Activated B cell treated with CpG ODN at 0.5 μM for 24 hours (primary cell): ENCODE measurements at regions of chr16 and their contacts with region 1.

Region 1: DNA sequence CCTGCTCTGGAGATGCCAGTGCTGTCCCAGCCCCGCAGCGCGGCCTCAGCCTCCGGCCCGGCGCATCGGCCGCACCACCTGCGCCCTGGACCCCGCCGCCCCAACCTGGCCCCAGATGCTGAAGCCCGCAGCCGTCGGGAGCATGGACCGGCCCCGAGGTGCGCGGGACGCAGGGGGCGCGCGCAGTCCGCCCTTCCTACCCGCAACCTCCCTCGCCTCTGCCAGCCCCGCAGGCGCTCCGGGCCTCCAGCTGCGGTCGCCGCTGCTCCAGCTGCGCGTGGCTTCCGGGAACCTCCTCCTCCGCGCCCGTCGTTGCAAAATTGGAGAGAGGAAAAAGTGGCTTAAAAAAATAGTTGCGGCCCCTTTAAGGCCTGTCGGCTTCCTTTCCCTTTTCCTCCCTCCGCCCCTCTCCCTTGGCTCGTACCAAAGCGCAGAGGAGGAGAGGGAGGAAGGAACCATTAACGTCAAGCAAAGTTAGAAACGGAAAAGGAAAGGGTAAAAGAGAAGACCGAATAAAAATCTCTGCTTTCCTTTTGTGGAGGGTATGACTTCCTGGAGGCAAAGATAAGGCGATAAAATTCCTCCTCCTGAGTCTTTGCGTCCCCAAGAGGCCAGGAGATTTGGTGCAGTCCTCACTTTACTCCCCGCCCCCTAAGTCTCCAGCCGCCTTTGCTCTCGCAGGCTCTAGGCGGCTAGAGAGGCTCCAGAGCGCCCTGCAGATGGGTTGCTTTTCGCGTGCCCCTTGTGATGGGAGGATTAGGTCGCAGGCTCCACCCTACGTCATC is at the start of gene CDIPT:
- DNase-seq: peak; percentile 79
- ATAC-seq: peak; percentile 98
- H3K4me3 Mint-ChIP-seq: peak within 1 kb of the TSS; percentile 94
- H3K27ac Mint-ChIP-seq: peak within 1 kb of the TSS; percentile 100
- H3K4me1 Mint-ChIP-seq: peaks cover 24% of the 10 kb centered on the region
- H3K27me3 Mint-ChIP-seq: peaks cover 6% of the 10 kb centered on the region
- CTCF ChIP-seq: no peak
- total RNA-seq, gene CDIPT: 28.7 and 29.8 TPM in 2 replicates

Region 2: DNA sequence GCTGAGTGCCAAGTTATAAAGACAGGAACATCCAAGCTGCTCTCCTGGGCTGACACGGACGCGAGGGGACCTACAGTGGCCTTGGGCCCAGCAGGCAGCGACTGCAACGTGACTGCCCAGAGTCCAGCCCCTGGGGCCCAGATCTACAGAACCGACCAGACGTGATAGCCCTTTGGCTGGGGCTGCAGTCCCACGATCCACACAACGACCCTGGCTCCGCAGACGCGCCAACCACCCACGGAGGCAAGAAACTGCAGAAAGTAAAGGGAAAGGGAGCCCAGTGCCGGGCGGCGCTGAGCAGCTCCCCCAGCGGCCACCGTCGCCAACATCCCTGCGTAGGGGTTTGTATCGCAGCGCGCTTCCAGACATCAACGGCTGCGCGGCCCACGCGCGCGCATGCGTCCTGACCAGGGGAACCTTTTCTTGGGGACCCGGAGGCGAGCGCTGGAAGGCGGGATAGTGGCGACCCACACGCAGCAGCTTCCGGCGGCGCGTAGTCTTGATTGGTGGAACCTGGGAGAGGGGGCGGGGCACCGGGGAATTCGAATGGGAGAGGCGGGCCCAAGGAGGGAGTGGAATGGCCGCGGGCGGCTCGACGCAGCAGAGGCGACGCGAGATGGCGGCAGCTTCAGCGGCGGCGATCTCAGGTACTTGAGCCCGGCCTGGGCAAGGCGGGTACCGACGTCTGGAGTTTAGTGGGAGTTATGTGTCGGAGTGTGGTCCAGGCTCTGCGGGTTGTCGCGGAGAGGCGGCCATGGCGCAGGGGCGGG is 72.7 kb before region 1 on chr16 and contains the start of gene KIF22:
- CTCF ChIA-PET with region 1: no interaction called
- POLR2A ChIA-PET with region 1: interaction called, 6 read pairs
- intact Hi-C with region 1: loop called (anchors 1 kb)
- DNase-seq: peak; percentile 99
- ATAC-seq: peak; percentile 97
- H3K4me3 Mint-ChIP-seq: peak within 1 kb of the TSS; percentile 98
- H3K27ac Mint-ChIP-seq: peak within 1 kb of the TSS; percentile 93
- H3K4me1 Mint-ChIP-seq: peaks cover 34% of the 10 kb centered on the region
- H3K27me3 Mint-ChIP-seq: no peaks in the 10 kb centered on the region
- CTCF ChIP-seq: no peak
- total RNA-seq, gene KIF22: 33.1 and 40.1 TPM in 2 replicates

Region 3: GRCh38 chr16:29842732-29843346 is 20.2 kb before region 1 on chr16:
- CTCF ChIA-PET with region 1: no interaction called
- POLR2A ChIA-PET with region 1: no interaction called
- intact Hi-C with region 1: no loop called
- DNase-seq: no peak
- ATAC-seq: no peak
- H3K4me3 Mint-ChIP-seq: no peak overlapping the region
- H3K27ac Mint-ChIP-seq: no peak overlapping the region
- H3K4me1 Mint-ChIP-seq: no peaks in the 10 kb centered on the region
- H3K27me3 Mint-ChIP-seq: no peaks in the 10 kb centered on the region
- CTCF ChIP-seq: no peak

Region 4: DNA sequence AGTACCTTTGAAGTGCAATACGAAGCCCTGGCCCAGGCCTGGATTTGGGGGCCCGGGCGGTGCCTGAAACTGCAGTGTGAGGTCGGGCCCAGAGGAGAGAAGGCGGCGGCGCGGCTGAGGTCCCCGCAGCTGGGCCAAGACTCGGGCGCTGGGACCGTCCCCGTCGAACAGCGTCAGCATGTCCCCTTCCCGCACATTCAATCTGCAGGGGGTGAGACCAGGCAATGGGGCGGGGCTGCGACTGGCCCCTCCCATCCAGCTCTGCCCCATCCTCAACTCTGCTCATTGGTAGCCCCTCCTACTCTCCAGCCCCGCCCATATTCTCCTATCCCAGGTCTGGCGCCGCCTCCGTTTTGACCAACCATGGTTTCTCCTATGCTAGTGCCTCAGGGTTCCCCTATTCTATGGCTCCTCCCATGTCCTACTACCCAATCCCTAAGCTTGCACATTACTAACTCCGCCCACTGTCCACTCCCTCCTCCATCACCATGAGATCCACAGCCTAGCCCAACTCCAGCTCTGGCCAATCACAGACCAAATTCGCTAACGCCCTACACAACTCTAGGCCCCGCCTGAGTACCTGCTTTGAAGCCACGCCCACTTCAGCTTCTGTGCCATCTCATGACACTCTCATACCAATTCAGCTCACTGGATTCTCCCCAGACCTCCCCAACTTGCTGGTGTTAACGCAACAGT is 14.3 kb after region 1 on chr16:
- CTCF ChIA-PET with region 1: no interaction called
- POLR2A ChIA-PET with region 1: no interaction called
- intact Hi-C with region 1: loop called (anchors 2 kb)
- DNase-seq: peak; percentile 23
- ATAC-seq: peak; percentile 79
- H3K4me3 Mint-ChIP-seq: peak overlapping the region; percentile 56
- H3K27ac Mint-ChIP-seq: no peak overlapping the region
- H3K4me1 Mint-ChIP-seq: peaks cover 17% of the 10 kb centered on the region
- H3K27me3 Mint-ChIP-seq: peaks cover 30% of the 10 kb centered on the region
- CTCF ChIP-seq: no peak

Region 5: GRCh38 chr16:29915590-29916247 is 52.6 kb after region 1 on chr16:
- CTCF ChIA-PET with region 1: no interaction called
- POLR2A ChIA-PET with region 1: interaction called, 10 read pairs
- intact Hi-C with region 1: no loop called
- DNase-seq: no peak
- ATAC-seq: no peak
- H3K4me3 Mint-ChIP-seq: no peak overlapping the region
- H3K27ac Mint-ChIP-seq: no peak overlapping the region
- H3K4me1 Mint-ChIP-seq: peaks cover 3% of the 10 kb centered on the region
- H3K27me3 Mint-ChIP-seq: no peaks in the 10 kb centered on the region
- CTCF ChIP-seq: no peak

Region 6: DNA sequence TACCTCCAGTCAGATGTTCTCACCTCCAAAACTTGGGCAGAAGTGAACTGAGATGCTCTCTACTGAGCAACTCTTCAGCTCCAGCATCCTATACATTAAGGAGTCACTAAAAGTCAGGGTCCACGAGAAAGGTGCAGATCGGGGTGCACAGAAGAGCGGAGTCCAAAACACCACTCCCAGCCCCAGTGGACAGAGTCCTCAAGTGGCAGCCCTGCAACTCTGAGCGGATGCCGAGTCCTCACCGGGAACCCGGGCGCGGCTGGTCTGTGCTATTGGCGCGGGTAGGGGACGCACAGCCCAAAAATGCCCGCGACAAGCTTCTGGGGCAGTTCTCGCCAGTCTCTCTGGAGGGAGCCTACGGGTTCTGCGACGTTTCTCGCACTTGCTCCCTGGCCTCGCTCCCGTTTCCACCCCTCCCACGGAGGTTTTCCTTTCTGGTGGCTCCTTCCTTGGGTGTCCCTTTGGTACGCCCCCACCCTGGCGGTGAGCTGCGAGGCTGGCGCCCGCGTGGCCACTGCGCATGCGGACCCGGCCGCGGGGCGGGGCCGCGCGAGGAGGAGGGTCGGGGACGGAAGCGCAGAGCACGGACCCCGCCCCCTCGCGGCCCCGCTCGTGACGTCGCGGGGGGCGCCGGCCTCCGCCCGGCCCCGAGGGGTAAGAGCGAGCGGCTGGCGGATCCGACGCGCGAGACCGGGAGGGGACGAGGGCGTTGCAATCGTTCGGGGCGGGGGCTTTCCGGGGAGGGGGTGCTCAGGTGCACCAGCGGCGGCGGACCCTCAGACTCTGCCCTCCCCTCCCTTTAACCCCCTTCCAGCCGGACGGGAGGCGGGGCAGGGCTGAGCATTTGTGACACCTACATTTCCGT is 98.6 kb after region 1 on chr16 and contains the start of gene TMEM219:
- CTCF ChIA-PET with region 1: no interaction called
- POLR2A ChIA-PET with region 1: no interaction called
- intact Hi-C with region 1: loop called (anchors 1 kb)
- DNase-seq: peak; percentile 98
- ATAC-seq: peak; percentile 90
- H3K4me3 Mint-ChIP-seq: peak within 1 kb of the TSS; percentile 88
- H3K27ac Mint-ChIP-seq: peak within 1 kb of the TSS; percentile 90
- H3K4me1 Mint-ChIP-seq: peaks cover 17% of the 10 kb centered on the region
- H3K27me3 Mint-ChIP-seq: no peaks in the 10 kb centered on the region
- CTCF ChIP-seq: no peak
- total RNA-seq, gene TMEM219: 50.3 and 50.8 TPM in 2 replicates

Region 7: GRCh38 chr16:29995911-29996772 is 133.1 kb after region 1 on chr16 and contains the start of gene INO80E:
- CTCF ChIA-PET with region 1: interaction called, 4 read pairs
- POLR2A ChIA-PET with region 1: interaction called, 5 read pairs
- intact Hi-C with region 1: loop called (anchors 1 kb)
- DNase-seq: peak; percentile 100
- ATAC-seq: peak; percentile 96
- H3K4me3 Mint-ChIP-seq: peak within 1 kb of the TSS; percentile 98
- H3K27ac Mint-ChIP-seq: peak within 1 kb of the TSS; percentile 97
- H3K4me1 Mint-ChIP-seq: peaks cover 29% of the 10 kb centered on the region
- H3K27me3 Mint-ChIP-seq: no peaks in the 10 kb centered on the region
- CTCF ChIP-seq: no peak
- total RNA-seq, gene INO80E: 83.5 and 93.6 TPM in 2 replicates

Region 8: GRCh38 chr16:30052671-30053372 is 189.7 kb after region 1 on chr16:
- CTCF ChIA-PET with region 1: no interaction called
- POLR2A ChIA-PET with region 1: no interaction called
- intact Hi-C with region 1: loop called (anchors 1 kb)
- DNase-seq: peak; percentile 86
- ATAC-seq: peak; percentile 87
- H3K4me3 Mint-ChIP-seq: peak overlapping the region; percentile 84
- H3K27ac Mint-ChIP-seq: peak overlapping the region; percentile 46
- H3K4me1 Mint-ChIP-seq: peaks cover 9% of the 10 kb centered on the region
- H3K27me3 Mint-ChIP-seq: no peaks in the 10 kb centered on the region
- CTCF ChIP-seq: no peak